Left cardiac atrium (tissue), 4 donors: ENCODE measurements at regions of chrX and their contacts with region 1.

Region 1: DNA sequence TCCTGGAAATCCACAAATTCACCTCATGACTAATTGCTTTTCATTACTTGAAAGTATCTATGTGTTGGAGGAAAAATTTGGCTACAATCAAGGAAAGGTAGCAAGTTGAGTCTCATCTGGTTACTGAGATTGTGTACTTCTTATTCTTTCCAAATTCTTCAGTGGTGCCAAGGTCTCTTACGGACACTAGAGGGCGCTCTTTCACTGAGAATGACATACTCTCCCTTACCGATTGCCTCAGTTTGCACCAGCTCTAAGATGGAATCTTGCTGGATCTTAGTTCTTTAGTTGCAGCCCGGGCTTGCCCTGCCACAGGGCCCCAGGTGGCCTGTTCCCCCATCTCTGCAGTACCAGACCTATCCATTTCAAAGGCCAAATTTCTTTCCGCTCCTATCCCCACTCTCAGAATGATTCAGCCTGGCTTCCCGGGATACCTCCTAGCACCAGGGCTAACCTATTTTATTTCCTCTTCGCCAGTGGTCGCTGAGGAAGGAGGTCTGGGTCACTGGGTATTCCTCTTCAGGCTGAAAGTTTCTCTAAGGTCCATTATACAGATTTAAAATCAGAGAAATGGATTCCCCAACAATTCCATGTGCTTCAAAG is 24.6 kb upstream of the GPR50 start:
- DNase-seq: no peak
- ATAC-seq: no peak

Region 2: GRCh38 chrX:151099001-151099400 is 52.8 kb before region 1 on chrX:
- intact Hi-C with region 1: no loop called
- DNase-seq: no peak
- ATAC-seq: no peak

Region 3: GRCh38 chrX:151359931-151360871 is 208.4 kb after region 1 on chrX:
- intact Hi-C with region 1: loop called in 1 of 2 experiments (anchors 5 kb)
- DNase-seq: peak; percentile 30
- ATAC-seq: peak; percentile 44 to 65

Region 4: DNA sequence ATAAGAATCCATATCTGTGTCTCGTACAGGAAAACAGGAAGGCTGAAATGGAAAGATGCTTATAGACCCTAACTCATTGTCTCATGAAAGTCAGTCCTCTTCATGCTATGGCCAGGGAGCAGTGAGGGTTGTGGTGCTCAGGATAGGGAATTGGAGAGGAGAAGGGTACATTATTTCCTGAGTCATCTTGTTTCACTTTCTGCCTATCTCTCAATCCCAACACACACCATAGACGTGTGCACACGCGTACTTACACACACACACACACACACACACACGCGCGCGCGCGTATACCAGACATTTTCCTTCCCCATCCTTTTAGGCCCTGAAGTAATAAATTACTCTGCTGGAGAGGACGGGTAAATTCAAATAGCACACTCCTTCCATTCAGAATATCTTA is 489.8 kb after region 1 on chrX:
- intact Hi-C with region 1: no loop called
- DNase-seq: no peak
- ATAC-seq: no peak

Region 5: GRCh38 chrX:151680805-151681204 is 529.0 kb after region 1 on chrX:
- intact Hi-C with region 1: loop called (anchors 2 to 5 kb)
- DNase-seq: peak; percentile 34
- ATAC-seq: peak; percentile 34 to 51